ENCODE measurements at regions of chr11 and their contacts with region 1.

Region 1: GRCh38 chr11:8905528-8906165 is 5.3 kb upstream of the AKIP1 start:
- DNase-seq: peak; percentile 83
- H3K4me3 Mint-ChIP-seq: peak overlapping the region; percentile 15
- H3K27ac Mint-ChIP-seq: peak overlapping the region; percentile 79
- H3K4me1 Mint-ChIP-seq: peaks cover 26% of the 10 kb centered on the region
- H3K27me3 Mint-ChIP-seq: no peaks in the 10 kb centered on the region
- CTCF ChIP-seq: no peak

Region 2: DNA sequence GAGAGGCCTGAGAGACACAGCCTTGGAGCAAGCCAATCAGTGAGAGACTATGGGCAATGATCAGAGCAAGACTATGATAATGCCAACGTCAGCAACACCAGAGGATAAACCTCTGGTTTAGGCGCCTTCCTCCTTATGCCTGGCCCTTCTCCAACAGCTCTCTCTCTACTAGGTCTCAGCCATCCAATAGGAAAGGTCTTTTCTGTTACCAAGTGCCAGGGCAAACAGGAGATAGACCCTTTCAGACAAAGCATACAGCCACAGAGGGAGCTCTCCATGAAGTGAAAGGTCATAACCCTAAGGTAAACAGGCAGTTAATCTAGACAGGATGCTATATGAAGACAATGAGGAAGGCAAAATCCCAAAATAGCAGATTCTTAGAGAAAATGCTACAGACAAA is 321.1 kb before region 1 on chr11:
- CTCF ChIA-PET with region 1: no interaction called
- POLR2A ChIA-PET with region 1: no interaction called
- intact Hi-C with region 1: no loop called
- DNase-seq: no peak
- H3K4me3 Mint-ChIP-seq: no peak overlapping the region
- H3K27ac Mint-ChIP-seq: no peak overlapping the region
- H3K4me1 Mint-ChIP-seq: peaks cover 10% of the 10 kb centered on the region
- H3K27me3 Mint-ChIP-seq: no peaks in the 10 kb centered on the region
- CTCF ChIP-seq: no peak

Region 3: GRCh38 chr11:8870411-8871170 is 35.1 kb before region 1 on chr11:
- CTCF ChIA-PET with region 1: interaction called, 4 read pairs
- POLR2A ChIA-PET with region 1: interaction called, 15 read pairs
- intact Hi-C with region 1: loop called (anchors 1 kb)
- DNase-seq: peak; percentile 59
- H3K4me3 Mint-ChIP-seq: peak overlapping the region; percentile 78
- H3K27ac Mint-ChIP-seq: no peak overlapping the region
- H3K4me1 Mint-ChIP-seq: peaks cover 10% of the 10 kb centered on the region
- H3K27me3 Mint-ChIP-seq: no peaks in the 10 kb centered on the region
- CTCF ChIP-seq: no peak

Measured in MCF 10A (cell line).